Transverse colon (tissue), 4 donors: ENCODE measurements at regions of chr6 and their contacts with region 1.

Region 1: DNA sequence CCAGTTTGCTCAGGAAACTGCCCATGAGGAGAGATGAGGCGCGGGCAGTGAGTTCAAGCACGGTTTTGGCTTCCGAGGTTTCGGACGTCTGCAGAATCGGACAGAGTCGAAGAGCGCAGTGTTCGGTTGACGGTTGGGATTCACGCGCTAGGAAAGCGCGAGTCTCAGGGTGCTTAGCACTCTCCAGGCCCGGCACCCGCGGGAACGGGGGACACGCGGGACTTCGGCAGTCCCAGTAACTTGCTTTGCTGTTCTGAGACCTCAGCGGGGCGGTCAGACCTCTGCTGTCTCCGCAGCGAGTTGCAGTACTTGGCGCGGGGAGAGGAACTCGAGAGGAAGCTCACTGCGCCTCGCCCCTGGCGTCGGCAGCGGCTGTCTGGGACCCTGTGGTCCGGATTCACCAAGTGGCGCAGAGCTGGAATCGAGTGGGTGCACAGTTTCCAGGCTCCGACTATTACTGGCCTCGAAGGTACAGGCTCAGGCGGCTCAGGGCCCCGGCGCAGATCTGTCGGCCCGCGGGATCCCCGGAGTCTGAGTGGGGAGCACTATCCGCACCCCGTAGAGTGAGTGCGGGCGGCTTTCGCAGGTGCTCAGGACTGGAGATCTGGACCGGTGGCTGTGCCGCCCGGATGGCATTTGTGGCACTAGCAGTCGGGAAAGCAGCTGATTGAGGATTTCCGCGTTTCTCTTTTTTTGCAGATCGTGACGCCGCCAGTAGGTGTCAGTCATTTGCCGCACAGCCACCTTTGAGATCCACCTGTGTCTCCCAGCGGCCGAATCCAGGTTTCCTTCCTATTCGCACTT is at the start of gene POM121L2:
- DNase-seq: peak; percentile 80
- H3K4me3 ChIP-seq: peak within 1 kb of the TSS; percentile 40 to 58 (median 46)
- H3K27ac ChIP-seq: no peak within 1 kb of the TSS
- H3K4me1 ChIP-seq: peaks cover 0 to 10% (median 8%) of the 10 kb centered on the region in 4 donors
- H3K27me3 ChIP-seq: peaks cover 99% of the 10 kb centered on the region
- CTCF ChIP-seq: peak; percentile 59 to 74 (median 65)
- EP300 ChIP-seq: no peak
- POLR2A ChIP-seq: no peak
- total RNA-seq, gene POM121L2: not detected

Region 2: GRCh38 chr6:27370391-27370790 is 58.0 kb after region 1 on chr6:
- in situ Hi-C with region 1: no loop called
- intact Hi-C with region 1: no loop called
- DNase-seq: no peak
- H3K4me3 ChIP-seq: no peak overlapping the region
- H3K27ac ChIP-seq: no peak overlapping the region
- H3K4me1 ChIP-seq: peaks cover 6 to 10% (median 8%) of the 10 kb centered on the region in 4 donors
- H3K27me3 ChIP-seq: no peaks in the 10 kb centered on the region
- CTCF ChIP-seq: no peak
- EP300 ChIP-seq: no peak
- POLR2A ChIP-seq: no peak

Region 3: GRCh38 chr6:27753668-27754407 is 441.5 kb after region 1 on chr6:
- in situ Hi-C with region 1: loop called in 1 of 4 experiments (anchors 25 kb)
- intact Hi-C with region 1: no loop called
- DNase-seq: peak; percentile 79
- H3K4me3 ChIP-seq: peak overlapping the region in 3 of 4 donors; percentile 66 to 92 (median 85)
- H3K27ac ChIP-seq: peak overlapping the region; percentile 89 to 96 (median 92)
- H3K4me1 ChIP-seq: peaks cover 3 to 26% (median 12%) of the 10 kb centered on the region in 4 donors
- H3K27me3 ChIP-seq: peaks cover 5% of the 10 kb centered on the region
- CTCF ChIP-seq: peak in 2 of 5 experiments; percentile 22 to 25
- EP300 ChIP-seq: no peak
- POLR2A ChIP-seq: no peak